PC-3 (cell line): ENCODE measurements at regions of chr3 and their contacts with region 1.

Region 1: GRCh38 chr3:87350364-87351199 is 74.2 kb upstream of the POU1F1 start:
- DNase-seq: peak; percentile 80
- ATAC-seq: peak; percentile 91
- H3K4me3 ChIP-seq: no peak overlapping the region
- H3K27ac ChIP-seq: no peak overlapping the region
- H3K4me1 ChIP-seq: peaks cover 18% of the 10 kb centered on the region; the same call in 1 of the 2 replicates
- H3K27me3 ChIP-seq: no peaks in the 10 kb centered on the region
- CTCF ChIP-seq: peak; percentile 95

Region 2: DNA sequence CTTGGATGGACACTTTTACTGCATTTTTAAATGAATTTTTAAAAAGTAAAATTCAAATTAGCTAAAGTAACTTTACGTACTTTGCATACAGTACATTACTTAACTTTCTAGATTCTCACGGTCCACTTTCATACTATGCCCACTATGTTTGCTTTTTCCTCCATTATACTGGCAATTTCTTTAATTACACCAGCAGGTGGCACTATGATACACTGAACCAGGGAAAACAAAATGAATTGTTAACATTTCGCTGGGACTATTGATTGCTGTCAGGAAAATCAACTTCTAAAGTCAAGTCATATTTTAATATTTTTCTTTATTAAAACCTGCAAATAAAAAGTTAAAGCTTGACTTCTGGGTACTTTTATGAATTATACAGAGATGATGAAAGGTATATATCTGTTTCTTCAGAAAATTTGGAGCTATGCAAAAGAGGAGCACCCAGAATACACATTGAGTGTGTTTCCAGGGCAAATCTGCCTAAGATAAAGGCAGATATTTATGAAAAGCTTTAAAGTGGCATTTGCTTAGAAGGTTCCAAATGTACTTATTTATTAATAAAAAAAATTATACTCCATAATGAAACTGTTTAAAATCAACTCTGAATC is 52.4 kb before region 1 on chr3:
- CTCF ChIA-PET with region 1: interaction called, 7 read pairs
- POLR2A ChIA-PET with region 1: no interaction called
- intact Hi-C with region 1: loop called (anchors 1 kb)
- DNase-seq: peak; percentile 80
- ATAC-seq: peak; percentile 80
- H3K4me3 ChIP-seq: no peak overlapping the region
- H3K27ac ChIP-seq: no peak overlapping the region
- H3K4me1 ChIP-seq: no peaks in the 10 kb centered on the region
- H3K27me3 ChIP-seq: no peaks in the 10 kb centered on the region
- CTCF ChIP-seq: peak; percentile 92

Region 3: GRCh38 chr3:87318617-87319021 is 32.0 kb before region 1 on chr3:
- CTCF ChIA-PET with region 1: interaction called, 3 read pairs
- POLR2A ChIA-PET with region 1: no interaction called
- intact Hi-C with region 1: loop called (anchors 5 kb)
- DNase-seq: peak; percentile 79
- ATAC-seq: peak; percentile 67
- H3K4me3 ChIP-seq: peak overlapping the region; percentile 26
- H3K27ac ChIP-seq: peak overlapping the region; percentile 84
- H3K4me1 ChIP-seq: peaks cover 42% of the 10 kb centered on the region
- H3K27me3 ChIP-seq: no peaks in the 10 kb centered on the region
- CTCF ChIP-seq: no peak

Region 4: GRCh38 chr3:87370007-87370406 is 19.4 kb after region 1 on chr3:
- CTCF ChIA-PET with region 1: no interaction called
- POLR2A ChIA-PET with region 1: no interaction called
- intact Hi-C with region 1: no loop called
- DNase-seq: no peak
- ATAC-seq: no peak
- H3K4me3 ChIP-seq: no peak overlapping the region
- H3K27ac ChIP-seq: no peak overlapping the region
- H3K4me1 ChIP-seq: peaks cover 15% of the 10 kb centered on the region
- H3K27me3 ChIP-seq: no peaks in the 10 kb centered on the region
- CTCF ChIP-seq: no peak

Region 5: GRCh38 chr3:87498358-87499080 is 147.9 kb after region 1 on chr3:
- CTCF ChIA-PET with region 1: interaction called, 7 read pairs
- POLR2A ChIA-PET with region 1: no interaction called
- intact Hi-C with region 1: loop called (anchors 1 kb)
- DNase-seq: peak; percentile 71
- ATAC-seq: peak; percentile 80
- H3K4me3 ChIP-seq: peak overlapping the region; percentile 8; the same call in 1 of the 2 replicates
- H3K27ac ChIP-seq: peak overlapping the region; percentile 65
- H3K4me1 ChIP-seq: peaks cover 43% of the 10 kb centered on the region
- H3K27me3 ChIP-seq: no peaks in the 10 kb centered on the region
- CTCF ChIP-seq: no peak

Region 6: GRCh38 chr3:87503900-87504508 is 153.4 kb after region 1 on chr3:
- CTCF ChIA-PET with region 1: interaction called, 7 read pairs
- POLR2A ChIA-PET with region 1: no interaction called
- intact Hi-C with region 1: loop called (anchors 1 kb)
- DNase-seq: peak; percentile 92
- ATAC-seq: peak; percentile 54
- H3K4me3 ChIP-seq: no peak overlapping the region
- H3K27ac ChIP-seq: no peak overlapping the region
- H3K4me1 ChIP-seq: peaks cover 34% of the 10 kb centered on the region
- H3K27me3 ChIP-seq: no peaks in the 10 kb centered on the region
- CTCF ChIP-seq: peak; percentile 96

Region 7: GRCh38 chr3:87771341-87772192 is 421.0 kb after region 1 on chr3:
- CTCF ChIA-PET with region 1: no interaction called
- POLR2A ChIA-PET with region 1: no interaction called
- intact Hi-C with region 1: loop called (anchors 10 kb)
- DNase-seq: peak; percentile 62
- ATAC-seq: peak; percentile 56
- H3K4me3 ChIP-seq: no peak overlapping the region
- H3K27ac ChIP-seq: no peak overlapping the region
- H3K4me1 ChIP-seq: peaks cover 5% of the 10 kb centered on the region
- H3K27me3 ChIP-seq: no peaks in the 10 kb centered on the region
- CTCF ChIP-seq: peak; percentile 90